CD4-positive, alpha-beta memory T cell (primary cell): ENCODE measurements at regions of chr6 and their contacts with region 1.

Region 1: GRCh38 chr6:170516783-170517616 is 36.1 kb downstream of the PSMB1 start:
- DNase-seq: peak; percentile 40 to 53 (median 48)
- H3K4me3 ChIP-seq: no peak overlapping the region
- H3K4me3 Mint-ChIP-seq: peak overlapping the region in 6 of 8 donors; percentile 46 to 77 (median 70)
- H3K27ac ChIP-seq: no peak overlapping the region
- H3K27ac Mint-ChIP-seq: no peak overlapping the region
- H3K4me1 ChIP-seq: peaks cover 3% of the 10 kb centered on the region
- H3K4me1 Mint-ChIP-seq: peaks cover 0 to 2% (median 0%) of the 10 kb centered on the region in 4 donors
- H3K27me3 ChIP-seq: peaks cover 3% of the 10 kb centered on the region
- H3K27me3 Mint-ChIP-seq: peaks cover 12 to 23% of the 10 kb centered on the region in 2 donors

Region 2: DNA sequence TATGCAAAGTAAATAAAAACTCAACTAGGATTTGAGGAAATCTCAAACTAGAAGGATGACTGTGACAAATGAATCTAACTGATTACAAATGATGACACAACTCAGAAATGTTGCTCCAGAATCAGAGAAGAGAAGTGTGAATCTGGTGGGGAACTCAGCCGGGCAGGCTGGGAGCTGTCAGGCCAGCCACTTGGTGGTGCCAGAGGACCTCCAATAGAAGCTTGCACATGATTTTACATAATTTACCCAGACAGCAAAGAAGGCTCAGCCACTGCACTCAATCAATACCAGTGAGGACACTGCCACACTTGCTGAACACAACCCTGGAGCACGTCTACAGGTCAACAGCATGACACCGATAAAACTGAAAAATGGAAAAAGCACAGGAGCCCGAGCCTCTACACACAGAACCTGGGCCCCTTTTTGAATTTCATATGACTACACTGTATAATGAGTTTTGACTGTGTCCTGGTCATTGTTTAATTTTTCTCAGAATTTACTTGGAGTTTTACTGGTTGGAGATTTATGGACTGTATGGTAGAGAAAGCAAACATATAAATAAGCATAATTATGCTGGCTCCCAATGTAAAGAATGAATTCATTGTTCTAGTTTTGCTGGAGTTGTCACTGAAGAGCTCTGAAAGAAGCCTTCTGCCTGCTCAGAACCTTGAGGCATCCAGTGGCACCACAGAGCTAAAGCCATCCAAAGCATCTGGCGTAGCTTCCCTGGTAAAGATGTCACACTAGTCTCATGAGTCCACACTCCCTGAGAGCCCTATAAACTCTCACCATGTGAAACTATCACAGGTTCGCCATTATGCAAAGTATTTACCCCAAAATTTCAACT is 1559.9 kb before region 1 on chr6:
- CTCF ChIA-PET with region 1: no interaction called
- POLR2A ChIA-PET with region 1: no interaction called
- intact Hi-C with region 1: loop called (anchors 2 kb)
- DNase-seq: peak in 4 of 5 donors; percentile 25 to 35 (median 32)
- H3K4me3 ChIP-seq: no peak overlapping the region
- H3K4me3 Mint-ChIP-seq: no peak overlapping the region
- H3K27ac ChIP-seq: no peak overlapping the region
- H3K27ac Mint-ChIP-seq: no peak overlapping the region
- H3K4me1 ChIP-seq: no peaks in the 10 kb centered on the region
- H3K4me1 Mint-ChIP-seq: no peaks in the 10 kb centered on the region
- H3K27me3 ChIP-seq: peaks cover 3% of the 10 kb centered on the region
- H3K27me3 Mint-ChIP-seq: peaks cover 15 to 16% of the 10 kb centered on the region in 2 donors

Region 3: DNA sequence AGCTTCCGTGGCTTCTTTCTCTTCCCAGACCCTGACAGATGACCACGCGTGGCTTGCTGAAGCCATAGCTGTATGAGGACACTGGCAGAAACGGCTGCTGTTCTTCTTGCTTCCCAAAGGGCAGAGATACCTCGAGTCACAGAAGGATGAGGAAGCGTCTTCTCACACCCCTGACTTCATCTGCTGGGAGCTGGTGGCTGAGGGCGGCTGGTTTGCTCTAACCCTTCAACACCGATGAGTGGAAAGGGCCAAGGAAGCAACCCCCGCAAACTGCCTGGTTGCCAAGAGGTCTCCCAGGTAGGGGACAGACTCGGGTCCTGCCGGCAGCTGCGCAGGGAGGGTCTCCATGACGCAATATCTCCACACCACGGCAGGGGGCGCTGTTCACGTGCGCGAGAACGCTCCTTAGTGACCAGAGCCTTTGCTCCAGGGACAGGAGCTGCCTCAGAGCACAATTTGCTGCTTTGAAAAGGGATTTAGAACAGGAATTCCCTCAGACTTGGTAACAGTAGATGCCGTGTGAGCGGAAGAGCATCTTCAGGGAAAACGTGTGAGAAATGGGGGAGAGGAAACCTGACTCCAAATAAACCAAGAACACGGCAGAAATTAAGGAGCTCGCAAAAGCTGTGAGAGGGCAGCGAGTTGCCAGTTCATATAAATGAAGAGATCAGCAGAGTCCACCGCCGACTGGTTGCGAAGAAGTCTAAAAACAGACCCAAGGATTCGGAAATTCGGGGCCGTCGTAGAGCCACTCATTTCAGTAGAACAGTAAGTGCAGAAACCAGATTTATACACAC is 685.4 kb before region 1 on chr6:
- CTCF ChIA-PET with region 1: interaction called, 33 read pairs
- POLR2A ChIA-PET with region 1: no interaction called
- intact Hi-C with region 1: loop called (anchors 1 kb)
- DNase-seq: peak in 4 of 5 donors; percentile 52 to 56 (median 54)
- H3K4me3 ChIP-seq: no peak overlapping the region
- H3K4me3 Mint-ChIP-seq: no peak overlapping the region
- H3K27ac ChIP-seq: no peak overlapping the region
- H3K27ac Mint-ChIP-seq: peak overlapping the region in 1 of 7 donors; percentile 3
- H3K4me1 ChIP-seq: no peaks in the 10 kb centered on the region
- H3K4me1 Mint-ChIP-seq: peaks cover 0 to 6% (median 4%) of the 10 kb centered on the region in 4 donors
- H3K27me3 ChIP-seq: peaks cover 3% of the 10 kb centered on the region
- H3K27me3 Mint-ChIP-seq: peaks cover 26 to 30% of the 10 kb centered on the region in 2 donors

Region 4: DNA sequence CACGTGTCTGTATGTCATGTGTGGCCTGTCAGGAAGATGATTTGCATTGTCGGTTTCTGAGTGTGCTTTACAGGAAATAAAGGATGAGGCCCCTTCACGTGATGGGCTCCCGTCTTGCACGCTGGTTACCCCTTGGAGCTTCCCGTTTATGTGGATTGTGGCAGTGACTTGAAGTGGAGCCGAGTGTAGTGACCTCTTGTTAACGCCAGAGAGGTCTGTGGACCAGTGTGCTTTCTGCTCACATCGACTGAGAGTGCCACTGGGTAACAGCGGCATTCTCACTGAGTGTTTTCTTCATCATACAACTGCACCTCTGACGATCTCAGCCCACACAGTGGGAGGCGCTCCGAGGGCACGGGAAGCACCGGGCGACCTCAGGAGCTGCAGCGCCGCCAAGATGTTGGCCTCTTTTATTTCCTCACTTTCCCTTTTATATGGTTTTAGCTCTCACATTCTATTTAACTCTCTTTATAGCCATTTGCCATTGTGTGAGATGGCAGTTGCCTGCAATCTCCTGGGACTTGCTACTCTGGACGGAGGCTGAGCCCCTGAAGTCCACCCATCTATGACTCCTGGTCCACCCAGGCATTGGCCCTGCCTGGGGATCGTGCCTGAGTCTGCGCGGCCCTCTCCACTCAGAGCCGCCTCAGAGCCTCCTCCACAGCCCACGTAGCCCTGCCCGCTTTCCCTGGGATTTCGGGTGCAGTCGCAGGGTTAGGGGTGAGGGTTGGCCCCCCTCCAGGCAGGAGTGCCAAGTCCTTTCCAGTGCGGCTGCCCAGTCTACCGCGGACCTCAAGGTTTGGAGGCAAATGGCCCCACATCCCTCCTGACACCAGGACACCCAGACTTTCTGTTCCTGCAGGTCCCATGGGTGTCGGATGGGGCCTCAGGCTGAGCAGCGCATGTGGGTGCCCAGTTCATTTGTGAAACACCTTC is 526.6 kb before region 1 on chr6:
- CTCF ChIA-PET with region 1: no interaction called
- POLR2A ChIA-PET with region 1: no interaction called
- intact Hi-C with region 1: loop called (anchors 1 kb)
- DNase-seq: peak in 4 of 5 donors; percentile 10 to 28 (median 25)
- H3K4me3 ChIP-seq: no peak overlapping the region
- H3K4me3 Mint-ChIP-seq: peak overlapping the region; percentile 50 to 84 (median 62)
- H3K27ac ChIP-seq: no peak overlapping the region
- H3K27ac Mint-ChIP-seq: peak overlapping the region in 5 of 7 donors; percentile 10 to 81 (median 57)
- H3K4me1 ChIP-seq: peaks cover 21% of the 10 kb centered on the region
- H3K4me1 Mint-ChIP-seq: peaks cover 17 to 27% (median 24%) of the 10 kb centered on the region in 4 donors
- H3K27me3 ChIP-seq: no peaks in the 10 kb centered on the region
- H3K27me3 Mint-ChIP-seq: no peaks in the 10 kb centered on the region

Region 5: GRCh38 chr6:170316071-170316470 is 200.9 kb before region 1 on chr6:
- CTCF ChIA-PET with region 1: no interaction called
- POLR2A ChIA-PET with region 1: no interaction called
- intact Hi-C with region 1: no loop called
- DNase-seq: no peak
- H3K4me3 ChIP-seq: no peak overlapping the region
- H3K4me3 Mint-ChIP-seq: no peak overlapping the region
- H3K27ac ChIP-seq: no peak overlapping the region
- H3K27ac Mint-ChIP-seq: peak overlapping the region in 1 of 7 donors; percentile 57
- H3K4me1 ChIP-seq: peaks cover 21% of the 10 kb centered on the region
- H3K4me1 Mint-ChIP-seq: peaks cover 36 to 65% (median 50%) of the 10 kb centered on the region in 4 donors
- H3K27me3 ChIP-seq: no peaks in the 10 kb centered on the region
- H3K27me3 Mint-ChIP-seq: no peaks in the 10 kb centered on the region

Region 6: DNA sequence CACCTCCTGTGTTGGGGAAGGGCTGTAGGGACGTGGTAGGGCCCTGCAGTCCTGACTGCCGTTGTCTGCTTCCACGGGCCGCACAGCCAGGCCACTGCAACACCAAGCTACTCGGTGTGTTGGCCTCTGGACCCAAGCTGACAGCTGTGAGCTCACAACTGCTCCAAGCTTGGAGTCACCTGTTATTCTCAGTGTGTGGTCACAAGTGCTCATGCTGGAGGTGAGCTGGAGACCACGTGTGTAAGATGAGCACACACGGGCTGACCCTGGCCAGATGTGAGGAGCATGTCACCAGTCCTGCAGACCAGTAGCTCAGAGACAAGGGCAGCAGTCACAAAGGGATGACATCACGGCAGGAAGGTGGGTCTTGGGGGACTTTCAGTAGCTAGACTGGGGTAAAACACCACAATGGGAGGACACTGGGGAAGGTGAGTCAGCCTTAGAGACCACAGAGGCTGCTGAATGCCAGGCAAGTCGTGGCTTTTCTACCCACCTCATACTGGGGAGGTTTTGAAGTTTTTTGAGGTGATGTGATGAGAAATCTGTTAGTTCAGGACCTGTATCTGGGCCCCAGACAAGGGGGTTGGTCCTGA is 123.1 kb before region 1 on chr6:
- CTCF ChIA-PET with region 1: no interaction called
- POLR2A ChIA-PET with region 1: no interaction called
- intact Hi-C with region 1: no loop called
- DNase-seq: no peak
- H3K4me3 ChIP-seq: no peak overlapping the region
- H3K4me3 Mint-ChIP-seq: no peak overlapping the region
- H3K27ac ChIP-seq: no peak overlapping the region
- H3K27ac Mint-ChIP-seq: peak overlapping the region in 1 of 7 donors; percentile 35
- H3K4me1 ChIP-seq: no peaks in the 10 kb centered on the region
- H3K4me1 Mint-ChIP-seq: no peaks in the 10 kb centered on the region
- H3K27me3 ChIP-seq: no peaks in the 10 kb centered on the region
- H3K27me3 Mint-ChIP-seq: no peaks in the 10 kb centered on the region